Natural killer cell (primary cell): ENCODE measurements at regions of chr15 and their contacts with region 1.

Region 1: DNA sequence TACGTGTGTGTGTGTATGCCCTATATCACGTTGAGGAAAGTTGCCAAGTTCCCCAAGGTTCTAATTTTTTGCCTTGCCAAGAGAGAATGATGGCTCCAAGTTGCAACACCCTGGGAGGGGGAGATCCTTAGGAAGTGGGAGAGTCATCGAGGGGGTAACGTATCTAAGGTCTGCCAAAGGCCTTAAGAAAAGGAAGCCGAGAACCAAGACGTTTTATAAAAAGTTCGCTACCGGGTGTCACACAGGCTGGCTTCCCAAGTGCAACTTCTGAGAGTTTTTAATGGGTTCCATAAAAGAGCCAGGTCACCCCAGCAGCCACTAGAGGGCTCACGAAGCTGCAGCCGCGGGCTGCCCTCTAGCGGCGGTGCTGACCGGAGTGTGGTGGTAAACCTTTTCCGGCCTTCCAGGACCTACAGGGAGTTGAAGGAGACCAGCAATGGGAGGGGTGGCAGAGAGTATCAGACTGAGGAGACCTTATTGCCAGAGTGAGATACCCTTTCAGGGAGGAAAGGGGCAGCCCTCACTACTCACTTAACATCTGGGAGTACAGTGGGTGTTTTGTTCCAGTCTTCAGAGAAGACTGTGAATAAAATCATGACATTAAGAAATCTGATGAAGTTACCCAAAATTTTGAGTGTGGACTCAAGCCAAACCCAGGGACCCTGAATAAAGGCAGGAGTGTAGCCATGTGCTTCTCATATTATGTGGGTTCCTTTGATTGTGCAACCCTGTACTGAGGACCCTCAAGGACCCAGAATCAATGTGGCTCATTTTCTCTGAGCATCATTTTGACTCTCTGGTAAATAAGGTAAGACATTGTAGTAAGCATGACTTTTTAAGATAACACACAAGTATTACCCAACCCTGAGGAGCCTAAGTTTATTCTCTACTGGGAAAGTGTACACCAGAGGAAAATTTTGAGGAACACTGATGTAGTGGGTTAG is 2.5 kb upstream of the RFX7 start:
- DNase-seq: peak; percentile 81 to 92
- ATAC-seq: peak; percentile 78 to 89 (median 80)
- H3K4me3 ChIP-seq: peak overlapping the region; percentile 25
- H3K4me3 Mint-ChIP-seq: peak overlapping the region; percentile 92
- H3K27ac ChIP-seq: peak overlapping the region; percentile 68
- H3K27ac Mint-ChIP-seq: peak overlapping the region; percentile 89 to 90
- H3K4me1 ChIP-seq: peaks cover 21% of the 10 kb centered on the region
- H3K4me1 Mint-ChIP-seq: peaks cover 35 to 38% of the 10 kb centered on the region in 2 donors
- H3K27me3 ChIP-seq: no peaks in the 10 kb centered on the region
- H3K27me3 Mint-ChIP-seq: peaks cover 0 to 5% of the 10 kb centered on the region in 2 donors
- CTCF ChIP-seq: peak; percentile 100

Region 2: DNA sequence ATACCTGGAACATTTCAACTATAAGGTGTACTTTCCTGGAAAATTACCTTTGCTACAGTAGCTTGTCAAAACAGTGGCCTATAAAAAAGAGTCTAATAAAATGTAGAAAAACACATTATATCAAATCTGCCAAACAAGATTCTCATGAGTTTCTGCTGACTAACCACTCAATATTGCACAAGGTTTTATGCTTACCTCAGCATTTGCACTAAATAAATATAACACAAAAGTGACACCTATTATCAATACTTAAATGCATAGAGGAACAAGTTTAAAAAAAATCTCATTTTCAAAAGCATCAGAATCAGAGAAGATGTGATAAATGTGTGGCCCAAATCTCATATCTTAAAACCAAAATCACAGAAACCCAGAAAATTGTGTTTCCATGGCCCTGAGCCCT is 1330.8 kb before region 1 on chr15:
- intact Hi-C with region 1: no loop called
- DNase-seq: no peak
- ATAC-seq: no peak
- H3K4me3 ChIP-seq: no peak overlapping the region
- H3K4me3 Mint-ChIP-seq: no peak overlapping the region
- H3K27ac ChIP-seq: no peak overlapping the region
- H3K27ac Mint-ChIP-seq: no peak overlapping the region
- H3K4me1 ChIP-seq: no peaks in the 10 kb centered on the region
- H3K4me1 Mint-ChIP-seq: no peaks in the 10 kb centered on the region
- H3K27me3 ChIP-seq: no peaks in the 10 kb centered on the region
- H3K27me3 Mint-ChIP-seq: no peaks in the 10 kb centered on the region
- CTCF ChIP-seq: no peak

Region 3: DNA sequence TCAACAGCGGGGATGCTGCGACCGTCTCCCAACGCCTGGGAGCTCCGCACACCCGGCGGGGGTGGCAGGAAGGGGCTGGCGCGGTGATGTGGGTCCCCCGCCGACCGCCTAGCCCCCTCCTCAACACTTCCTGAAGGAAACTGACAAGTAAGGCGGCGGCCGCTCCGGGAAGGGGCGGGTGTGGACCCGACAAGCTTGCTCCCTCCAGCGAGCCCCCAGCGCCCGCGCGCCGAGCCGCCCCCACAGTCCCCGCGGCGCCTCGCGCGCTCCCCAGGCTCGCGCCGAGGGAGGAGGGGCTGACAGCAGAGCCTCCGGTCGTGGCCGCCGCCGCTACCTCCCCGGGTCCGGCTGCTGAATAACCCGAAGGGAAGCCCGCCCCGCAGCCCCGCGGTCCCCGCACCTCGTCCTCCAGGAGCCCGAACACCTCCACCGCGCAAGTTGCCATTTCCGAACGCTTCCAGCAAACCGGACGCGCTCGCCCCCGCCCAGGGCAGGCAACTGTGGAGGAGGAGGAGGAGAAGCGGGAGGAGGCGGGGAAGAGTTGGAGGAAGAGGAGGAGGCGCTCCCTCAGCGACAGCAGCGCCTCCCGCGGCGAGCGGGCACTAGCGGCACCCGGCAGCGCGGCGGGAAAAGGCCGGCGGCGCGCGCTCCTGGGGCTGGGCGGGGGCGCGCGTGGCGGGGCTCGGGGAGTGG is 252.9 kb before region 1 on chr15 and contains the start of gene NEDD4:
- intact Hi-C with region 1: loop called (anchors 10 kb)
- DNase-seq: peak; percentile 64 to 85
- ATAC-seq: peak; percentile 86 to 91 (median 88)
- H3K4me3 ChIP-seq: peak within 1 kb of the TSS; percentile 91
- H3K4me3 Mint-ChIP-seq: peak within 1 kb of the TSS; percentile 95
- H3K27ac ChIP-seq: no peak within 1 kb of the TSS
- H3K27ac Mint-ChIP-seq: peak within 1 kb of the TSS; percentile 15 to 80
- H3K4me1 ChIP-seq: peaks cover 5% of the 10 kb centered on the region
- H3K4me1 Mint-ChIP-seq: peaks cover 10 to 15% of the 10 kb centered on the region in 2 donors
- H3K27me3 ChIP-seq: no peaks in the 10 kb centered on the region
- H3K27me3 Mint-ChIP-seq: peaks cover 0 to under 1% of the 10 kb centered on the region in 2 donors
- CTCF ChIP-seq: peak; percentile 34
- total RNA-seq, gene NEDD4: 6.9 to 9.1 (median 7.8) TPM

Region 4: DNA sequence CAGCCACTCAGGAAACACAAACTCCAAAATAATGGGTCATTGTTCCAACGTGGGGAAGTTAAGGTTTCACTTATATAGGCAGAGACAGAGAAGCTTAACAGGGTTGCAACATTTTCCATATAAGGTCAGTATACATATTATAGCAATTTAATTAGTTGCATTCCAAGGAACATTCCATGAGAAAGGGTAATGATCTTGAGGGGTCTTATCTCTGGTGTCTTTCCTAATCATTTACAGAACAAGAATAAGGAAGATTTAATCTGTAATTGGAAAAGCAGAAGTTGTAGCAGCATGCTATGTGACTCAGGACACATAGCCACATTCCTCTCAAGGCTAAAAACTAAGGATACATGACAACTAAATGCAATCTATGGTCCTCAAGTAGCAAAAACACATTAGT is 213.9 kb after region 1 on chr15:
- intact Hi-C with region 1: no loop called
- DNase-seq: no peak
- ATAC-seq: no peak
- H3K4me3 ChIP-seq: no peak overlapping the region
- H3K4me3 Mint-ChIP-seq: no peak overlapping the region
- H3K27ac ChIP-seq: no peak overlapping the region
- H3K27ac Mint-ChIP-seq: no peak overlapping the region
- H3K4me1 ChIP-seq: peaks cover 7% of the 10 kb centered on the region
- H3K4me1 Mint-ChIP-seq: peaks cover 8 to 9% of the 10 kb centered on the region in 2 donors
- H3K27me3 ChIP-seq: no peaks in the 10 kb centered on the region
- H3K27me3 Mint-ChIP-seq: peaks cover 8 to 13% of the 10 kb centered on the region in 2 donors
- CTCF ChIP-seq: no peak